ENCODE measurements at regions of chr7 and their contacts with region 1.

Region 1: GRCh38 chr7:137898839-137899721 is 52.3 kb upstream of the DGKI start:
- DNase-seq: peak; percentile 58
- ATAC-seq: peak; percentile 92
- H3K4me3 ChIP-seq: no peak overlapping the region
- H3K27ac ChIP-seq: peak overlapping the region; percentile 25
- H3K4me1 ChIP-seq: peaks cover 42% of the 10 kb centered on the region
- H3K27me3 ChIP-seq: no peaks in the 10 kb centered on the region
- CTCF ChIP-seq: peak; percentile 97
- EP300 ChIP-seq: no peak
- POLR2A ChIP-seq: no peak
- RAD21 ChIP-seq: peak; percentile 79

Region 2: GRCh38 chr7:137656227-137656849 is 242.7 kb before region 1 on chr7:
- CTCF ChIA-PET with region 1: interaction called, 26 read pairs
- POLR2A ChIA-PET with region 1: no interaction called
- in situ Hi-C with region 1: loop called (anchors 5 kb)
- intact Hi-C with region 1: loop called (anchors 1 kb)
- DNase-seq: peak; percentile 59
- ATAC-seq: peak; percentile 86
- H3K4me3 ChIP-seq: no peak overlapping the region
- H3K27ac ChIP-seq: no peak overlapping the region
- H3K4me1 ChIP-seq: no peaks in the 10 kb centered on the region
- H3K27me3 ChIP-seq: peaks cover 5 to 18% of the 10 kb centered on the region in 2 experiments; a peak in 3 of 5 replicates
- CTCF ChIP-seq: peak; percentile 80
- EP300 ChIP-seq: no peak
- POLR2A ChIP-seq: no peak
- RAD21 ChIP-seq: peak; percentile 51; the same call in 1 of the 2 replicates

Region 3: GRCh38 chr7:137810248-137810647 is 88.8 kb before region 1 on chr7:
- CTCF ChIA-PET with region 1: no interaction called
- POLR2A ChIA-PET with region 1: no interaction called
- in situ Hi-C with region 1: no loop called
- intact Hi-C with region 1: no loop called
- DNase-seq: no peak
- ATAC-seq: no peak
- H3K4me3 ChIP-seq: no peak overlapping the region
- H3K27ac ChIP-seq: no peak overlapping the region
- H3K4me1 ChIP-seq: peaks cover 7% of the 10 kb centered on the region; the same call in 1 of the 2 replicates
- H3K27me3 ChIP-seq: peaks cover 0 to 8% of the 10 kb centered on the region in 2 experiments; a peak in 3 of 5 replicates
- CTCF ChIP-seq: no peak
- EP300 ChIP-seq: no peak
- POLR2A ChIP-seq: no peak
- RAD21 ChIP-seq: no peak

Region 4: GRCh38 chr7:137970253-137970975 is 71.3 kb after region 1 on chr7:
- CTCF ChIA-PET with region 1: no interaction called
- POLR2A ChIA-PET with region 1: no interaction called
- in situ Hi-C with region 1: no loop called
- intact Hi-C with region 1: loop called (anchors 2 kb)
- DNase-seq: no peak
- ATAC-seq: no peak
- H3K4me3 ChIP-seq: no peak overlapping the region
- H3K27ac ChIP-seq: peak overlapping the region; percentile 57
- H3K4me1 ChIP-seq: peaks cover 100% of the 10 kb centered on the region
- H3K27me3 ChIP-seq: no peaks in the 10 kb centered on the region
- CTCF ChIP-seq: no peak
- EP300 ChIP-seq: no peak
- POLR2A ChIP-seq: no peak
- RAD21 ChIP-seq: no peak

Region 5: GRCh38 chr7:138008547-138009349 is 109.7 kb after region 1 on chr7:
- CTCF ChIA-PET with region 1: interaction called, 46 read pairs
- POLR2A ChIA-PET with region 1: no interaction called
- in situ Hi-C with region 1: no loop called
- intact Hi-C with region 1: loop called (anchors 1 kb)
- DNase-seq: peak; percentile 62
- ATAC-seq: peak; percentile 64
- H3K4me3 ChIP-seq: peak overlapping the region in 1 of 3 experiments; percentile 41; a peak in 2 of 6 replicates
- H3K27ac ChIP-seq: no peak overlapping the region
- H3K4me1 ChIP-seq: peaks cover 23% of the 10 kb centered on the region
- H3K27me3 ChIP-seq: no peaks in the 10 kb centered on the region
- CTCF ChIP-seq: peak; percentile 80
- EP300 ChIP-seq: no peak
- POLR2A ChIP-seq: no peak
- RAD21 ChIP-seq: peak; percentile 84